Body of pancreas (tissue), 4 donors: ENCODE measurements at regions of chr16 and their contacts with region 1.

Region 1: GRCh38 chr16:71480956-71481355 is 8.2 kb downstream of the ZNF19 start:
- DNase-seq: no peak
- ATAC-seq: no peak
- H3K4me3 ChIP-seq: no peak overlapping the region
- H3K27ac ChIP-seq: no peak overlapping the region
- H3K4me1 ChIP-seq: peaks cover 7% of the 10 kb centered on the region
- H3K27me3 ChIP-seq: no peaks in the 10 kb centered on the region
- CTCF ChIP-seq: no peak
- POLR2A ChIP-seq: no peak

Region 2: GRCh38 chr16:71464231-71464630 is 16.7 kb before region 1 on chr16:
- intact Hi-C with region 1: loop called (anchors 2 kb)
- DNase-seq: no peak
- ATAC-seq: no peak
- H3K4me3 ChIP-seq: no peak overlapping the region
- H3K27ac ChIP-seq: no peak overlapping the region
- H3K4me1 ChIP-seq: peaks cover 3% of the 10 kb centered on the region
- H3K27me3 ChIP-seq: no peaks in the 10 kb centered on the region
- CTCF ChIP-seq: no peak
- POLR2A ChIP-seq: no peak

Region 3: DNA sequence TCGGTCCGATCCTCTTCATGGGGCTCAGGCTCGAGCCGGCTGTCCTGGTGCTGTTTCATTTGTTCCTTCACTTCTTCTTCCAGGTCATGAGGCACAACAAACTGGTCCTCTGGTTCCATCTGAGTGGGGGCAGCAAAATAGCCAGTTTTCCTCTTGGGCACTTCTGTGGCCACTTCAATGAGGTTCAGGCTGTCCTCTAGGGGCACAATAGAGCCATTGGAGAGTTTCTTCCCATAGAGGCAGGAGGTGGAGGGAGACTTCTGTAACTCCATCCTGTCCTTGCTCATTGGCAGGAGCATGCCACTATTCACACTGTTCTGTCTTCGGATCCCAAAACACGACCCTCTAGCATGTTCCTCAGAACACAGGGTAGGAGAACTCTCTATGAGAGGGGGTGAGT is 168.0 kb after region 1 on chr16:
- intact Hi-C with region 1: no loop called
- DNase-seq: no peak
- ATAC-seq: peak; percentile 31
- H3K4me3 ChIP-seq: no peak overlapping the region
- H3K27ac ChIP-seq: no peak overlapping the region
- H3K4me1 ChIP-seq: peaks cover 17% of the 10 kb centered on the region
- H3K27me3 ChIP-seq: no peaks in the 10 kb centered on the region
- CTCF ChIP-seq: peak in 4 of 7 experiments; percentile 22 to 32 (median 23)
- POLR2A ChIP-seq: no peak